ENCODE measurements at regions of chr4 and their contacts with region 1.

Region 1: DNA sequence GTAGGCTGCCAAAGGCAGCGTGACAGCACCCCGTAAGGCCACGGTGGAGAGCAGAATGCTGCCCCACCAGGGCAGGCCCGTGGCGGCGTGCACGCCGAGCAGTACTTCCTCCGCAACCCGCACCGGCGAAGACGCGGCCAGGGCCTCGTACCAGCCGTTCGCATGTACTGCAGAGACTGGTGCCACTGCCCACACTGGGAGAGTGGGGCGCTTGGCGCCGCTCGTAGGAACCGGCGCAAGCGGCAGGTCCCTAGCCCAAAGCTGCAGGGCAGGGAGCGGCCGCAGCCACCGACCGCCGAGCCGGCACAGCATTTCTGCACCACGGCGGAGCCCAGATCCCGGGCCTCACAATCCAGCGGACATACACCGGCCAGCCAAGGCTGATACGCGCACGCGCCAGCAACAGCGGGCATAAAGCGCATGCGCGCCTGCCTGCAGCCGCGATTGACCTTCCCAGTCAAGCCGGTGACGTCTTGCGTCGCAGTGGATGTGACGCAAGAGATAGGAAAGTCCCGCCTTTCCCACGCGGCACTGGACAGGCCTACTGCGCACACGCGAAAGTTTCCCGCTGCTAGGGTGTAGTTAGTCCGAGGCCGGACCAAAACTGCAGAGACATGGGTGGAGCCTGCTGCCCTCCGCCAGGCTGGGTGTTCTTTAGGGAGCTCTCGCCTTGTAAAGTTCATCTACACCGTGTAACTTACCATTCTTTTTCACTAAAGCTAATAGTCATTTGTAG is at the start of gene COX18:
- DNase-seq: peak; percentile 97
- ATAC-seq: peak; percentile 78
- H3K4me3 Mint-ChIP-seq: peak within 1 kb of the TSS; percentile 82
- H3K27ac Mint-ChIP-seq: peak within 1 kb of the TSS; percentile 98
- H3K4me1 Mint-ChIP-seq: peaks cover 36% of the 10 kb centered on the region
- H3K27me3 Mint-ChIP-seq: no peaks in the 10 kb centered on the region
- CTCF ChIP-seq: no peak
- total RNA-seq, gene COX18: 25.7 to 26.8 TPM

Region 2: GRCh38 chr4:73080789-73081188 is 11.3 kb after region 1 on chr4:
- CTCF ChIA-PET with region 1: interaction called, 3 read pairs
- POLR2A ChIA-PET with region 1: interaction called, 18 read pairs
- intact Hi-C with region 1: no loop called
- DNase-seq: no peak
- ATAC-seq: no peak
- H3K4me3 Mint-ChIP-seq: no peak overlapping the region
- H3K27ac Mint-ChIP-seq: no peak overlapping the region
- H3K4me1 Mint-ChIP-seq: peaks cover 14% of the 10 kb centered on the region
- H3K27me3 Mint-ChIP-seq: no peaks in the 10 kb centered on the region
- CTCF ChIP-seq: no peak

Region 3: DNA sequence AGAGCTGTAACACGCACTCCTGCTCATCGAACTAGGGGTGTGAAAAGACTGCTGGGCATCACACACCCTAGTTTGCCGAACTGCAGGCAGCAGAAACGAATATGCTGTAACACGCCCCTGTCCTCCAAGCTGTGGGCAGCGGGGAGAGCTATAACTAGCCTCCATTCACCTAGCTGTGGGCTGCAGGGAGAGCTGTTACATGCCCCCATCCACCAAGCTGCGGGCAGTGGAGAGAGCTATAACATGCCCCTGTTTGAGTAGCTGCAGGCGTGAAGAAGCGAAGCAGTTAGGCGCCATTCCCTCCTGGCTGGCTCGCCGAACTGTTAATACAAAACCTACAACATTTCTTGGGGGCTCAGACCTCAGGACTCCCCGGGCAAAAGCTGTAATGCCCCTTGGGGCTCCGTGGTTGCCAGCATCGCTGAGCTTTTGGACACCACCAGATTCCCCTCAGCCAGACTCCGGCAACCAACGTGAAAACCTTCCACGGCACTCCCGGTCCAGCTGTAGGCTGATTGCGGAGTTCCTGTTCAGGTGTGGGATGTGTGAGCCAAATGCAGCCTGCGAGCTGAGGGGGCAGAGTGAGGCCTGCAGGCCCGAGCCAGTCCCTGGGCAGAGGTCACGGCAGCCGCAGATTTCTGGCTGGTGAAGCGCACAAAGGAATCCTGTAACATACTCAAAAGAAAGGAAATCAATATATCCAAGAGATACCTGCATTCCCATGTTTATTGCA is 230.2 kb after region 1 on chr4:
- CTCF ChIA-PET with region 1: no interaction called
- POLR2A ChIA-PET with region 1: no interaction called
- intact Hi-C with region 1: no loop called
- DNase-seq: no peak
- ATAC-seq: no peak
- H3K4me3 Mint-ChIP-seq: no peak overlapping the region
- H3K27ac Mint-ChIP-seq: no peak overlapping the region
- H3K4me1 Mint-ChIP-seq: no peaks in the 10 kb centered on the region
- H3K27me3 Mint-ChIP-seq: no peaks in the 10 kb centered on the region
- CTCF ChIP-seq: no peak